HEK293 (cell line): ENCODE measurements at regions of chr14 and their contacts with region 1.

Region 1: DNA sequence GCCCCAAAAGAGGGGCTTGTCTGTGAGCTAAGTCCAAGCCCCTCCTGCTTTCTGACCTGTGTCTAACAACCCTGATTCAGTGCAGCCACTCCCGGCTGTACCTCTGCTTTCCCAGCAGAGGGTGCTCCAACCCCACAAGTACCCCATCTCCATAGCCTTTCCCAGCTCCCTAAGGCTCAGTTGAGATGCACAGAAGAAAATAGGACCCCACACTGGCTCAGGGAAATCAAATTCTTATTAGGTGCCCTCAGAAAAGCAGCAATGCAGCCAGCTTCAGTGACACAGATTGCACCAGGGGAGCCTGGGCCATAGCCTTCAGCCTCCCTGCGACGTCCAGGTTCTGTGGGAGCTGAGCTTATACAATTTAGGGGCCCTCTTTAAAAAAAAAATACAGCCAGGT is 49.9 kb downstream of the LRRC74A start:
- H3K4me3 ChIP-seq: no peak overlapping the region
- H3K27ac ChIP-seq: no peak overlapping the region
- H3K4me1 ChIP-seq: no peaks in the 10 kb centered on the region
- CTCF ChIP-seq: peak; percentile 64

Region 2: GRCh38 chr14:76887196-76887595 is 11.1 kb after region 1 on chr14:
- CTCF ChIA-PET with region 1: interaction called, 24 read pairs
- POLR2A ChIA-PET with region 1: no interaction called
- H3K4me3 ChIP-seq: no peak overlapping the region
- H3K27ac ChIP-seq: no peak overlapping the region
- H3K4me1 ChIP-seq: no peaks in the 10 kb centered on the region
- CTCF ChIP-seq: no peak

Region 3: DNA sequence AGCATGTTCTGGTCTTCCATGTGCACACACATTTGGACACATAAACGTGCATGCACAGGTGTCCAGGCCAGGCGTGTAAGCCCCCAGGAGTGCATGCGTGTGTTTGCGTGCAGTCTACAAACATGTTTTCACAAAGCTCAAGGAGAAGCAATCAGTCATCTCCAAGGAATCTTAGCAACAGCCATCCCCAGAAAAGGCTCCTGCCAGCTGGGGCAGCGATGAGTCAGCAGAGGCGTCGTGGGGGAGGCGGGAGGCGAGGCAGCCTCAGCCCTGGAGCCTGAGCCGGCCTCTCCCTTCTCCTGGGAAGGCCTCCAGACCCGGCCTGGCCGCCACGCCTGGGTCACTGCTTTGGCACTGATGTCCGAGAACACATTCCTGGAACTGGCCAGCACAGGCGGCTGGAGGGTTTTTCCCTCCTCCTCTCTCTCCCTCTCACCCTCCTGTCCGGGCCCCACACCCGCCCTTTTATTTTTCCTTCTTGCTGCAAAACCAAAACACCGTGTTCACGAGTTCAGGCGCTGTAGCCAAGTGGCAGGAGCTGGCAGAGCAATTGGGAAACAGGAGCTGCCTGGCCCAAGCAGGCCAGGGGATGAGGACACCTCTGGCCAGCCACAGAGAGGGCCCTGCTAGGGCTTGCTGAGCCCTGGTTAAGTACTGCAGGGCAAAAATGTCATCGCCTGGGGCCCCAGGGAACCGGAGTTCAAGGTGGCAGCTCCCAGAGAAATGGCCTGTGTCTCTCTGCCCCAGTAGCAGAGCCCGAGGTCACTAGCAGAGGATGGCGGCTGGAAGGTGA is 42.9 kb after region 1 on chr14:
- CTCF ChIA-PET with region 1: interaction called, 60 read pairs
- POLR2A ChIA-PET with region 1: no interaction called
- H3K4me3 ChIP-seq: no peak overlapping the region
- H3K27ac ChIP-seq: peak overlapping the region; percentile 95
- H3K4me1 ChIP-seq: peaks cover 32% of the 10 kb centered on the region
- CTCF ChIP-seq: peak; percentile 22; the same call in 1 of the 2 replicates

Region 4: GRCh38 chr14:77045238-77046162 is 169.4 kb after region 1 on chr14:
- CTCF ChIA-PET with region 1: interaction called, 20 read pairs
- POLR2A ChIA-PET with region 1: interaction called, 3 read pairs
- H3K4me3 ChIP-seq: no peak overlapping the region
- H3K27ac ChIP-seq: peak overlapping the region; percentile 49; the same call in 1 of the 2 replicates
- H3K4me1 ChIP-seq: peaks cover 45% of the 10 kb centered on the region
- CTCF ChIP-seq: no peak

Region 5: DNA sequence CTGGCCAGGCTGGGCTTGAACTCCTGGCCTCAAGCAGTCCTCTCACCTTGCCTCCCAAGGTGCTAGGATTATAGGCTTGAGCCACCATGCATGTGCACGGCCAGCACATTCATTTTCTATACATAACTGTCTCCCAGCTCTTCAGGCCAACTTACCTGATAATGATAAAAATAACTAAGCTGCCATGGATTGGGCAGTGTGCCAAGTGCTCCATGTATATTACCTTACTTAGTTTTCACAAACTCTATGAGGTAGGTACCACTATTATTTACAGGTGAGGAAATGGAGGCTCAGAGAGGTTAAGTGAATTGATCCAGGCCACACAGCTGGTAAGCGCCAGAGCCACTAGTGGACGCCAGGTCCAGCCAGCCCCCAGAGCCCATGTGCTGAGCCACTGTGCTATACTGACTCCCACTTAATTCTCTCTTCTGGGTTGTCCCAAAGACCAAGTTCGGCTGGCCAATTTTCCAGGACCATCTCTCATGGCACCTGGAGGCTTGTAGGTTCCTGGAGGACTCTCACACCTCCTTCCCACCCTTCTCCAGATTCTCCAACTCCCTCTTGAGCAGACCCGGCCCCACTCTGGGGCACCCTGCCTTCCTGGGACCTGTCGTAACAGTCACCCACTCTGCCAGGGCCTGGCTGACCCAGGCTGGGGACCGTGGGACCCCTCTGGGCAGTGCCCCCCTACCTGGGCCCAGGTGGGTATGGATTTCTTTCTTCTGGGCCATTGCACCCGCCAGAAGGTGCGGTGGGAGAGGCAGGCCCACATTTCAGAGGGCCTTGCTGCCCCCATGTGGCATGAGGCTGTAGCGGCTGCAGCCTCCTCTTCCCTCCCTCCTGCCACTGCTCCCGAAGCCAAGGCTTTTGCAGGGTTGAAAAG is 191.8 kb after region 1 on chr14:
- CTCF ChIA-PET with region 1: interaction called, 461 read pairs
- POLR2A ChIA-PET with region 1: interaction called, 3 read pairs
- H3K4me3 ChIP-seq: no peak overlapping the region
- H3K27ac ChIP-seq: no peak overlapping the region
- H3K4me1 ChIP-seq: no peaks in the 10 kb centered on the region
- CTCF ChIP-seq: peak; percentile 76

Region 6: GRCh38 chr14:77124345-77125280 is 248.5 kb after region 1 on chr14:
- CTCF ChIA-PET with region 1: interaction called, 16 read pairs
- POLR2A ChIA-PET with region 1: no interaction called
- H3K4me3 ChIP-seq: peak overlapping the region; percentile 35
- H3K27ac ChIP-seq: no peak overlapping the region
- H3K4me1 ChIP-seq: no peaks in the 10 kb centered on the region; the same call in 1 of the 2 replicates
- CTCF ChIP-seq: no peak